ENCODE measurements at regions of chr19 and their contacts with region 1.

Region 1: GRCh38 chr19:5577785-5578493 is 10.2 kb upstream of the TINCR start:
- DNase-seq: peak; percentile 92
- H3K4me3 ChIP-seq: peak overlapping the region in 1 of 8 donors; percentile 33
- H3K27ac ChIP-seq: no peak overlapping the region
- H3K4me1 ChIP-seq: peaks cover 0 to 11% (median 7%) of the 10 kb centered on the region in 6 donors
- H3K27me3 ChIP-seq: no peaks in the 10 kb centered on the region
- CTCF ChIP-seq: peak; percentile 59 to 98 (median 97)
- POLR2A ChIP-seq: no peak

Region 2: GRCh38 chr19:5048091-5048726 is 529.7 kb before region 1 on chr19:
- intact Hi-C with region 1: loop called (anchors 5 kb)
- DNase-seq: peak; percentile 90
- H3K4me3 ChIP-seq: no peak overlapping the region
- H3K27ac ChIP-seq: peak overlapping the region in 4 of 8 donors; percentile 27 to 63 (median 42)
- H3K4me1 ChIP-seq: peaks cover 6 to 64% (median 45%) of the 10 kb centered on the region in 6 donors
- H3K27me3 ChIP-seq: no peaks in the 10 kb centered on the region
- CTCF ChIP-seq: peak; percentile 96 to 100 (median 98)
- POLR2A ChIP-seq: no peak

Region 3: DNA sequence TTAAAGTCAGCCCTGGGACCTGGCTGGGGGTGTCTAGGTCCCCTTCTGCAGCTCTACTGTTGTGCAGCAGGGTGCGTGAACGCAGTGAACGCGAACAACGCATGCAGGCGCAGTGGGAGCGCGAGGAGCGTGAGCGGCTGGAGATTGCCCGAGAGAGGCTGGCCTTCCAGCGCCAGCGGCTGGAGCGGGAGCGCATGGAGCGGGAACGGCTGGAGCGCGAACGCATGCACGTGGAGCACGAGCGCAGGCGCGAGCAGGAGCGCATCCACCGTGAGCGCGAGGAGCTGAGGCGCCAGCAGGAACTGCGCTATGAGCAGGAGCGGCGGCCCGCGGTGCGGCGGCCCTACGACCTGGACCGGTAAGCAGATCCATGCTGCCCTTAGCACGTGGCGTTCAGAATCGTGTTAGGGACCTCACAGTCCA is 83.5 kb after region 1 on chr19:
- intact Hi-C with region 1: no loop called
- DNase-seq: peak; percentile 67
- H3K4me3 ChIP-seq: no peak overlapping the region
- H3K27ac ChIP-seq: no peak overlapping the region
- H3K4me1 ChIP-seq: no peaks in the 10 kb centered on the region
- H3K27me3 ChIP-seq: no peaks in the 10 kb centered on the region
- CTCF ChIP-seq: no peak
- POLR2A ChIP-seq: no peak